Activated T-helper 2 cell treated with anti-CD3 and anti-CD28 coated beads, Interferon-gamma antibody, Interleukin-2, Interleukin-4, amounts not matched to agents 10 μg/mL and 5 μg/mL and 100 μg/mL, durations not matched to agents 14 hours and 24 hours and 36 hours (primary cell): ENCODE measurements at regions of chr3 and their contacts with region 1.

Region 1: DNA sequence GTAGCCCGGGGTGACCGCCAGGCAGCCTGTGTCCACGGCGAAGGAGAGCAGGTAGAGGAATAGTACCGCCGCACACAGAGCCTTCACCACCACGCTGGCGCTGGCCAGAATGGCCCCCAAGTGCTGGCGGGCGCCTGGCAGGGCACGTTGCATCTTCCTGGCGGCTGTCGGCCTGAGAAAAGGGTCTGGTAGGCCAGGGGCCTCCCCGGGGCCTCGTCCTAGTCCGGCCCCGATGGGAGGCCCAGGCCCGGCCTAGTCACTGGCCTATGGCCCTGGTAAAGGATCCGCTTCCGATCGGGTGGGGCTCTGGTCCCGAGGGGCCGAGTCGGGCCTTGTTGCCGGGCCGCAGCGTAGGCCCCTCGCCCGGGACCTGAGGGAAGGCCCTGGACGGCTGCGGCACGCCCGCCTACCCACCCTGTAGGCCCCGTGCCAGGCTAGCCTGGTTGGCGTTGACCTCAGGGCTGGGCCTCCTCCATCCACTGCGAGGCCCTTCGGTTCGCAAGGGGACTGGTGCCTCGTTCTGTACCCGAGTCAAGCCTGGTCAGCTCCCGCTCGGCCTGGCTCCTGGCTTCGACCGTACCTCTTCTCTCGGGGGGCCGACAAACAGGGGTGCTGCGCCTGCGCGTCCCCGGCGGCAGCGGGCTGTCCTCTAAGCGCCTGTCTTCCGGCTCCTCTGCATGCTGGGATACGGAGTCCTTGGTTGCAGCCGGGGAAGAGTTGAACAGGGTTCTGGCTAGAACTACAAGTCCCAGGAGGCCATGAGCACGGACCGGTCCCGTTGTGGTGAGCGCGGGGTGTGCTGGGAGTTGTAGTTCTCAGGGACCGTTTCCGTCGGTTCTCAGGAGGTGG is at the start of gene TMEM115:
- DNase-seq: peak; percentile 93
- H3K4me3 Mint-ChIP-seq: peak within 1 kb of the TSS; percentile 98
- H3K27ac Mint-ChIP-seq: peak within 1 kb of the TSS; percentile 94
- H3K4me1 Mint-ChIP-seq: peaks cover 27% of the 10 kb centered on the region
- H3K27me3 Mint-ChIP-seq: no peaks in the 10 kb centered on the region
- total RNA-seq, gene TMEM115: 17.8 and 19.2 TPM in 2 replicates

Region 2: GRCh38 chr3:49813497-49814174 is 545.5 kb before region 1 on chr3 and contains the start of gene UBA7:
- intact Hi-C with region 1: no loop called
- DNase-seq: peak; percentile 45
- H3K4me3 Mint-ChIP-seq: peak within 1 kb of the TSS; percentile 92
- H3K27ac Mint-ChIP-seq: peak within 1 kb of the TSS; percentile 91
- H3K4me1 Mint-ChIP-seq: peaks cover 23% of the 10 kb centered on the region
- H3K27me3 Mint-ChIP-seq: no peaks in the 10 kb centered on the region
- total RNA-seq, gene UBA7: 92.0 and 95.7 TPM in 2 replicates

Region 3: GRCh38 chr3:50292159-50293078 is 66.7 kb before region 1 on chr3 and contains the start of gene IFRD2:
- intact Hi-C with region 1: loop called (anchors 2 kb)
- DNase-seq: peak; percentile 96
- H3K4me3 Mint-ChIP-seq: peak within 1 kb of the TSS; percentile 95
- H3K27ac Mint-ChIP-seq: peak within 1 kb of the TSS; percentile 96
- H3K4me1 Mint-ChIP-seq: peaks cover 9% of the 10 kb centered on the region
- H3K27me3 Mint-ChIP-seq: no peaks in the 10 kb centered on the region
- total RNA-seq, gene IFRD2: 154 and 164 TPM in 2 replicates

Region 4: GRCh38 chr3:51384726-51385473 is 1025.8 kb after region 1 on chr3 and contains the start of gene MANF:
- intact Hi-C with region 1: loop called (anchors 10 kb)
- DNase-seq: peak; percentile 97
- H3K4me3 Mint-ChIP-seq: peak within 1 kb of the TSS; percentile 96
- H3K27ac Mint-ChIP-seq: peak within 1 kb of the TSS; percentile 97
- H3K4me1 Mint-ChIP-seq: peaks cover 41% of the 10 kb centered on the region
- H3K27me3 Mint-ChIP-seq: no peaks in the 10 kb centered on the region
- total RNA-seq, gene MANF: 235 and 238 TPM in 2 replicates